Activated CD8-positive, alpha-beta memory T cell treated with anti-CD3 and anti-CD28 coated beads, Interleukin-2, amount 10 ng/mL, durations not matched to agents 7 days and 5 days (primary cell): ENCODE measurements at regions of chr18 and their contacts with region 1.

Region 1: DNA sequence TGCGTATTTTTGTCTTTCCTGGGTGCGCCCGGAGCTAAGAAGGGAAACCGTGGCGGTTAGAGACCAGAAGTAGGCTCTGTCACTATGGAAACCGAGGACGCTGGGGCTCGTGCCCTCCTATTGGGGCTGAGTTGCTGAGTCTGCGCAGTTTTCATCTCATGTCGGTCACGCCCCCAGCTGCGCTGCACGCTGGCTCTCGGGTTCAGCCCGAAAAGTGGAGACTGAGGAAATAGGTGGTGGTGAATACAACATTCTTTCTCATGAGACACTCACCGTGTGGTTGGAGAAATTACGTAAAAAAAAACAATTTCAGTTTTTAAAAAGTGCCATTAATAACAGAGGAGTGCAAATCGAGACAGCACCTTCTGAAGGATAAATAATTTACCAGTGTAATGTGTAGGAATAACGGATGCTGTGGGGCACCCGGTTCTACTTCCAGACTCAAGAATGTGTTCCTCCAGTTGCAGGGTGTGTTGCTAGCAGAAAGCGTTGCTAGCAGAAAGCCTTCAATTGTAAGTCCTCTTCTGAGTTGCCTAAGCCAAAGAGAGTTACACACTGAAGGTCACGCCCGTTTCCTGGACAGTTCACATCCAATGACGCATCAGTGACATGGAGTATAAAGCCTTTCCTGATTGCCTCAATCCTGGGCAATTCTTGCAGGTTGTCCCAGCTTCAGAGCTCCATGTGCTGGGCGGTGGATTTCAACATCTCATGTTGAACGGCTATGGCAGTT is 20.4 kb upstream of the CXXC1 start:
- DNase-seq: peak; percentile 96
- ATAC-seq: peak; percentile 100
- H3K4me3 Mint-ChIP-seq: peak overlapping the region; percentile 82
- H3K27ac Mint-ChIP-seq: peak overlapping the region; percentile 67
- H3K4me1 Mint-ChIP-seq: peaks cover 14% of the 10 kb centered on the region
- H3K27me3 Mint-ChIP-seq: peaks cover 30% of the 10 kb centered on the region

Region 2: DNA sequence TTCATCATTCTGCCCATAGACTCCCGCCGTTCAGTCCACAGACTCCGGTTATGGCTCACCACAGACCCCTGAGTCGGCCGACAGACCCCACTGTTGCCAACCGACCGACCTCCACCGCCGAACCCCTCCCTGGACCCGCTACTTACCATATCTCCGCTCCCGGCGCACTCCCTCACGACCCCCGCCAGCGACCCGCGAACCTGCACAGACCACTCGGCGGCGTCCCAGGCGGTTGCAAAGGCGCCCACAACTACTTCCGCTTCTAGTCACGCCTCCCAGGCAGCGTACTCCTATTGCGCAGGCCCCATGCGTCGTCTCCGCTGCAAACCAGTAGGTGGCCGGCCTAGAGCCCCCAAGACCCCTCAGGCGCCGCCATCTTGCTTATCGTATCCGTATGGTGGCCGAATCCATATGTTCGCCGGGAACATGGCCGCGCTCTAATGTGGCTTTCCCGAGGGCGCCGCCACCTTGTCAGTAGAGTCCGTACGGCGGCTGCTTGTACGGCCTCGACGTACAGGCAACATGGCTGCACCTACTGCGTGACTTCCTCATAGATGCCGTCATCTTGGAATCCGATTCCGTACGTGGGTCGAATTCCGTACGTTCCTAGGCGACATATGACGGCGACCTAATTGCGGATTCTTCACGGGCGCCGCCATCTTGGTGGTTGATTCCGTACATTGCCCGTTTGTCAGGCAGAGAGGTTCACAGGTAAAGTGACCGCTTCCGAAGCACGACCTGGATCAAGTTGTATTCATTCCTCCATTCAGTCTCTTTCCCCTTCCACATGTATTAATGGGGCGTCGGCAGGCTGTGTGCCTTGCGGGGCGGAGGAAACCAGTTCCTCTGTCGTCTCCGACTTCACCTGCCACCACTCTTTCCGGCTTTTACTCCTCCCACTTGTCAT is 20.2 kb before region 1 on chr18 and contains the start of gene CXXC1:
- CTCF ChIA-PET with region 1: interaction called, 10 read pairs
- DNase-seq: peak; percentile 98
- ATAC-seq: peak; percentile 90
- H3K4me3 Mint-ChIP-seq: peak within 1 kb of the TSS; percentile 92
- H3K27ac Mint-ChIP-seq: peak within 1 kb of the TSS; percentile 94
- H3K4me1 Mint-ChIP-seq: peaks cover 39% of the 10 kb centered on the region
- H3K27me3 Mint-ChIP-seq: no peaks in the 10 kb centered on the region
- total RNA-seq, gene CXXC1: 128 to 150 TPM